GM10248 (cell line): ENCODE measurements at regions of chr12 and their contacts with region 1.

Region 1: DNA sequence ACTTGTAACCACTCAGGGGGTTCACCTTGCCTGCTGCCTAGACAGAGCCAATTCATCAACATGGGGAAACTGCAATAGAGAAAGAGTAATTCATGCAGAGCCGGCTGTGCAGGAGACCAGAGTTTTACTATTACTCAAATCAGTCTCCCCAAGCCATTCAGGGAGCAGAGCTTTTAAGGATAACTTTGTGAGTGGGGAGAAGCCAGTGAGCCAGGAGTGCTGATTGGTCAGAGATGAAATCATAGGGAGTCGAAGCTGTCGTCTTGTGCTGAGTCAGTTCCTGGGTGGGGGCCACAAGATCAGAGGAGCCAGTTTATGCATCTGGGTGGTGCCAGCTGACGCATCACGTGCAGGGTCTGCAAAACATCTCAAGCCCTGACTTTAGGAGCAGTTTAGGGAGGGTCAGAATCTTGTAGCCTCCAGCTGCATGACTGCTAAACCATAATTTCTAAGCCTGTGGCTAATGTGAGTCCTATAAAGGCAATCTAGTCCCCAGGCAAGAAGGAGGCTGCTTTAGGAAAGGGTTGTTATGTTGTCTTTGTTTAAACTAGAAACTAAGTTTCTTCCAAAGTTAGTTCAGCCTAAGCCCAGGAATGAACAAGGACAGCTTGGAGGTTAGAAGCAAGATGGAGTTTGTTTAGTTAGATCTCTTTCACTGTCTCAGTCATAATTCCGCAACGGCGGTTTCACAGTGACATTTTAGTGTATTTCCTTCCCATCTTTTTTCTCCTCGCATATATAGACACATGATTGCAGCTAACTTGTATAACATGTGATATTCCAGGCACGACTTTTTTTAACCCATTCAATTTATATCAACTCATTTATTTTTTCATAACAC is 68.9 kb upstream of the NCOR2 start:
- DNase-seq: no peak
- CTCF ChIP-seq: no peak

Region 2: GRCh38 chr12:124651516-124652273 is 15.3 kb after region 1 on chr12:
- CTCF ChIA-PET with region 1: interaction called, 21 read pairs
- POLR2A ChIA-PET with region 1: no interaction called
- DNase-seq: no peak
- CTCF ChIP-seq: no peak